Heart left ventricle (tissue), 16 donors: ENCODE measurements at regions of chr15 and their contacts with region 1.

Region 1: GRCh38 chr15:42046579-42046978 is 25.7 kb upstream of the PLA2G4E start:
- DNase-seq: no peak
- ATAC-seq: no peak
- H3K4me3 ChIP-seq: no peak overlapping the region
- H3K27ac ChIP-seq: no peak overlapping the region
- H3K4me1 ChIP-seq: peaks cover 0 to 15% (median 2%) of the 10 kb centered on the region in 12 donors
- H3K27me3 ChIP-seq: no peaks in the 10 kb centered on the region
- CTCF ChIP-seq: no peak
- POLR2A ChIP-seq: no peak

Region 2: DNA sequence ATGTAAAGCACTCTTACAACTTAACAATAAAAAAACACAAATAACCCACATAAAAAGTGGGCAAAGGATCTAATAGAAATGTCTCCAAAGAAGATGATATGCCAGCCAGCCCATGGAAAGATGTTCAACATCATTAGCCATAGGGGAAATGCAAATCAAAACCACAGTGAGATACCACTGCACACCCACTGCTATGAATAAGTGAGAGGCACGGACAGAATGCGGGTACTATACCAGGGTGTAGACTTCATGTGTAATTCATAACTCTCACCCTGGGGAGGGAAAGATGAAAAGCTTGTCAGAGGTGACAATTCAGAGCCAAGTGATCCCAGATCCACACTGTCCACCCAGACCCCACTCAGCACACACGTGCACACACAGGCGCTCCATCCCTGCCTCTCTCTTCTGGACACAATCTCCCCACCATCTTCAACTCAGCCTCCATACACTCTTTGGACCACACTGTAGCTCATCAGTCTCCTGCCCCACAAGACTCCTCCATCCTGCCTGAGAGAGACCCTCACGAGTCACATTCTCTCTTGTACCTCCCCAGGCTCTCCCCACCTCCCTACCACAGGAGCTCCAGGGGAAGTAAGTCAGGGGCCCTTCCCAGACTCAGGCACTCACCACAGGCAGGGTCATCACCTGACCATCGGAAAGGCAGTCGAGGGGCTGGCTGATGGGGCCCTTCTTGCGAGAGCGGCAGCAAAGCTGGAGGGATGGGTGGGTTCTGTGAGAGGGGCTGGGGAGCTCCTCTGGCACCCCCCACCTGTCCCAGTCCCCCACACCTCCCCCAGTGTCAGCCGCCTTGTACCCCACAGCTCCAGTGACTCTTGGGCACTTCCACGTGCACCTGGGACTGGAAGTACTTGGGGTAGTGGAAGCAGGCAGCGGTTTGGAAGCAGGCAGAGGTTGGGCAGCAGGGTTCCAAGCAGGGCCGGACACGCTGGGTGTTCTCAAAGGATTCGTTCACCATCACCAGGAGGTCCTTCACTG is 47.0 kb before region 1 on chr15:
- intact Hi-C with region 1: loop called in 1 of 10 experiments (anchors 5 kb)
- DNase-seq: no peak
- ATAC-seq: peak in 1 of 4 donors; percentile 29
- H3K4me3 ChIP-seq: no peak overlapping the region
- H3K27ac ChIP-seq: no peak overlapping the region
- H3K4me1 ChIP-seq: no peaks in the 10 kb centered on the region
- H3K27me3 ChIP-seq: peaks cover 0 to 3% (median 0%) of the 10 kb centered on the region in 9 donors
- CTCF ChIP-seq: no peak
- POLR2A ChIP-seq: no peak

Region 3: GRCh38 chr15:42137431-42138261 is 91.1 kb after region 1 on chr15:
- intact Hi-C with region 1: no loop called
- DNase-seq: no peak
- ATAC-seq: peak in 1 of 4 donors; percentile 45
- H3K4me3 ChIP-seq: no peak overlapping the region
- H3K27ac ChIP-seq: no peak overlapping the region
- H3K4me1 ChIP-seq: no peaks in the 10 kb centered on the region
- H3K27me3 ChIP-seq: no peaks in the 10 kb centered on the region
- CTCF ChIP-seq: peak; percentile 13 to 66 (median 51)
- POLR2A ChIP-seq: no peak